Cardiac septum (tissue), 1 donor: ENCODE measurements at regions of chr6 and their contacts with region 1.

Region 1: DNA sequence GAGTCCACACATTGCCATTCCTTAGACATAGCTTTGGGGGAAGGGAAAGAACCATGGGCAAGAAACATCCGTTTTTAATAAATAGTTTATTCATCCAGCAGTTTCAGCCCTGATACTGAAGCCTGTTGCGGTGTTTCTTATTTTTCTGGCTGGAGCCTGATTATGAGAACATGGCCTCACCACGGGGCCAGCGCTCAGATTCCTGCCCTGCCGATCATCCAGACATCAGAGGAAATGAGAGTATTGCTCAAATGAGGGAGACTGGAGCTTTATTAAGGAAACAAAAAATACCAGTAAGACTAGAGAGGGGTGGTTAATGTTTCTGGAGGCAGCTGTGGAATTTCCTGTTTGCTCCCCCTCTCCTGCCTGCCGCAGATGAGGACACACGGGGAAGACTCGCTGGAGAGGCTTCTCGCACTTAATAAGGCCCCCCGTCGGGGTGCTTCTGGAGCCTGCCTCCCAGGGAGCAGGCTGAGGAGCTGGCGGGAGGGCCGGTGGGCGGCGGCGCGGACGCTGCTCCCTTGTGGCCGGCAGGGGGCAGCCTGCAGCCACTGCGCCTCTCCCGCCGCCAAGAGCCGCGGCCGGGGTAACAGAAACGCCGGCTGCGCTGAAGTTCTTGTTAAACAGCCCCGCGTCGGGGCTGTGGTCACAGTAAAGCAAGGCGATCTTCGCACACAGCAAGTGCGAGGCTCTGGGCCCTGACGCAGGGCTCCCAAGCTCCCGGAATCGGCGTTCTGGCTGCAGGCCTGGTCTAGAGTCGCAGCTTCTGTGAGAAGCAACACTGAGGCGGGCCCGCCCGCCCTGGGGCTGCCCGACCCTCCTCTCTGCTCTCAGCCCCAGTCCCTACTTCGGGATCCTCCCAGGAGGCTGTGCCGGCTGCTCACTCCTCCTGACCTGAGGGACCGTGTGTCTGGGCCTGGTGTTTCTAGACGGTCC is 17.5 kb downstream of the LEMD2 start:
- DNase-seq: peak; percentile 82

Region 2: DNA sequence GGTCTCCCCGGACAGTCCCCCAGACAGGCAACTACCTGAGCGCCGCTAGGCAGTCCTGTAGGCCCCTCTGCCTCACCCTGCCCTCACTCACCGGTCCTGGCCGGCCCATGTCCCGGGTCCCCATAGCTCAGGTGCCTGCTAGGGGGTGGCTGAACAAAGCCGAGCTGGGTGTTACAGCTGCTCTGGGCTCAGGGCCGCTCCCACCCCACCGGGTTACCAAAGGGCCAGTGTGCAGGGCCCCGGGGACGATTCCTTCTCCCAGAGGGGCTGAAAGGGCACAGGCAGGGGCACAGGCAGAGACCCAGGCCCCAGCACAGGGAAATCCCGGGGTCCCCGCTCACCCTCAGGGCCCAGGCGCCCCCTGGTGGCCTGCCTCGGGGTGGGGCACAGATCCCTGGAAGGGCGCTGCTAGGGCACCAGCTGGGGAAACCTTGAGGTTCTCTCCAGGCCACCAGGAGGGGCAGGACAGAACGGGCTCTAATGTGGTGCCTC is 256.1 kb after region 1 on chr6:
- intact Hi-C with region 1: loop called (anchors 2 kb)
- DNase-seq: no peak

Region 3: GRCh38 chr6:34055223-34055933 is 284.0 kb after region 1 on chr6:
- intact Hi-C with region 1: loop called (anchors 10 kb)
- DNase-seq: no peak

Region 4: DNA sequence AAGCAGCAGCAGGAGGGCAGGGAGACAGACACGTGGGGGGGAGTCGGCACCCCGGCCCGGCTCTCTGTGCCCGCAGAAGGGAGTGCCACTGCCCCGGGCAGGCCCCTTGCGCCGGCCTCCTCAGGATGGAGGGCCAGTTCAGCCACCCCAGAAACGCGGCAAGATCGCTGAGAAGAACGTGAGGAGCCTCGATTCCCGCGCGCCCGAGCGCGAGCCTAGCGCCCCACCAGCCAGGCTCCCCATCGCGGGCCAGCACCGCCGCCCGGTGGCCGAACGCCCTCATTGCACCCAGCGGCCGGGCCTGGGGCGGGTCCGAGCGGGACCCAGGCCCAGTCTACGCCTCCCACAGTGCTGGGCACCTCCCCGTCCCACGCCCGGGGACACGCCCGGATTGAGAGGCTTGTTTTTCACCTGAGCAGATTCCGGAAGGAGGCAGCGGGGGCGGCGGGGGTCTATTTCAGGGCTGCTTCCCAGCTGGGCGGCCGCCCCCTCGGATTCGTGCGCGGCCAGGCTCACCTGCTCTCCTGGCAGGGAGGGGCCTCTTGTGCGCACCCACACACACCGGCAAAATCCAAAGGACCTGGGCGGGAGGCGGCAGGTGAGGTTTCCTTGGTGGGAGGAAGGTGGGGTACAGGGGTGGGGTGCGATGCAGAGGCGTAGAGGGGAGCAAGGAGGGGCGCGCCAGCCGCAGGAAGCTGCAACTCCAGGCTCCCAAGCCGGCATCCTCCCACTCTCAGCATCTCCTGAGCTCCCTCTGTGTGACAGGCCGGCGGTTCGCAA is 383.4 kb after region 1 on chr6:
- intact Hi-C with region 1: loop called (anchors 2 kb)
- DNase-seq: peak; percentile 69